CD8-positive, alpha-beta memory T cell (primary cell): ENCODE measurements at regions of chr1 and their contacts with region 1.

Region 1: GRCh38 chr1:222455188-222455879 is 92.6 kb downstream of the HHIPL2 start:
- DNase-seq: peak; percentile 62 to 83 (median 69)
- H3K4me3 ChIP-seq: no peak overlapping the region
- H3K4me3 Mint-ChIP-seq: peak overlapping the region in 5 of 7 donors; percentile 1 to 37 (median 8)
- H3K27ac ChIP-seq: no peak overlapping the region
- H3K27ac Mint-ChIP-seq: peak overlapping the region in 5 of 8 donors; percentile 0 to 65 (median 4)
- H3K4me1 ChIP-seq: peaks cover 9% of the 10 kb centered on the region
- H3K4me1 Mint-ChIP-seq: peaks cover 13 to 14% (median 14%) of the 10 kb centered on the region in 3 donors
- H3K27me3 ChIP-seq: no peaks in the 10 kb centered on the region
- H3K27me3 Mint-ChIP-seq: peaks cover under 1 to 3% of the 10 kb centered on the region in 2 donors

Region 2: GRCh38 chr1:221478050-221478949 is 977.0 kb before region 1 on chr1:
- CTCF ChIA-PET with region 1: interaction called, 13 read pairs
- POLR2A ChIA-PET with region 1: no interaction called
- DNase-seq: peak; percentile 14 to 72 (median 17)
- H3K4me3 ChIP-seq: no peak overlapping the region
- H3K4me3 Mint-ChIP-seq: no peak overlapping the region
- H3K27ac ChIP-seq: no peak overlapping the region
- H3K27ac Mint-ChIP-seq: peak overlapping the region in 2 of 8 donors; percentile 26 to 30
- H3K4me1 ChIP-seq: no peaks in the 10 kb centered on the region
- H3K4me1 Mint-ChIP-seq: peaks cover 0 to 3% (median 0%) of the 10 kb centered on the region in 3 donors
- H3K27me3 ChIP-seq: no peaks in the 10 kb centered on the region
- H3K27me3 Mint-ChIP-seq: peaks cover 4 to 14% of the 10 kb centered on the region in 2 donors

Region 3: GRCh38 chr1:221543529-221544120 is 911.7 kb before region 1 on chr1:
- CTCF ChIA-PET with region 1: no interaction called
- POLR2A ChIA-PET with region 1: interaction called, 10 read pairs
- DNase-seq: no peak
- H3K4me3 ChIP-seq: no peak overlapping the region
- H3K4me3 Mint-ChIP-seq: no peak overlapping the region
- H3K27ac ChIP-seq: no peak overlapping the region
- H3K27ac Mint-ChIP-seq: no peak overlapping the region
- H3K4me1 ChIP-seq: no peaks in the 10 kb centered on the region
- H3K4me1 Mint-ChIP-seq: no peaks in the 10 kb centered on the region
- H3K27me3 ChIP-seq: no peaks in the 10 kb centered on the region
- H3K27me3 Mint-ChIP-seq: peaks cover 3 to 31% of the 10 kb centered on the region in 2 donors

Region 4: GRCh38 chr1:222090103-222090502 is 365.2 kb before region 1 on chr1:
- CTCF ChIA-PET with region 1: interaction called, 42 read pairs
- POLR2A ChIA-PET with region 1: no interaction called
- DNase-seq: no peak
- H3K4me3 ChIP-seq: no peak overlapping the region
- H3K4me3 Mint-ChIP-seq: no peak overlapping the region
- H3K27ac ChIP-seq: no peak overlapping the region
- H3K27ac Mint-ChIP-seq: no peak overlapping the region
- H3K4me1 ChIP-seq: no peaks in the 10 kb centered on the region
- H3K4me1 Mint-ChIP-seq: no peaks in the 10 kb centered on the region
- H3K27me3 ChIP-seq: no peaks in the 10 kb centered on the region
- H3K27me3 Mint-ChIP-seq: peaks cover 10 to 14% of the 10 kb centered on the region in 2 donors

Region 5: GRCh38 chr1:222095606-222096475 is 359.5 kb before region 1 on chr1:
- CTCF ChIA-PET with region 1: interaction called, 42 read pairs
- POLR2A ChIA-PET with region 1: no interaction called
- DNase-seq: peak; percentile 34 to 67 (median 41)
- H3K4me3 ChIP-seq: no peak overlapping the region
- H3K4me3 Mint-ChIP-seq: no peak overlapping the region
- H3K27ac ChIP-seq: no peak overlapping the region
- H3K27ac Mint-ChIP-seq: no peak overlapping the region
- H3K4me1 ChIP-seq: no peaks in the 10 kb centered on the region
- H3K4me1 Mint-ChIP-seq: no peaks in the 10 kb centered on the region
- H3K27me3 ChIP-seq: no peaks in the 10 kb centered on the region
- H3K27me3 Mint-ChIP-seq: no peaks in the 10 kb centered on the region

Region 6: GRCh38 chr1:222441066-222441465 is 14.3 kb before region 1 on chr1:
- CTCF ChIA-PET with region 1: interaction called, 23 read pairs
- POLR2A ChIA-PET with region 1: no interaction called
- DNase-seq: no peak
- H3K4me3 ChIP-seq: no peak overlapping the region
- H3K4me3 Mint-ChIP-seq: no peak overlapping the region
- H3K27ac ChIP-seq: no peak overlapping the region
- H3K27ac Mint-ChIP-seq: peak overlapping the region in 1 of 8 donors; percentile 13
- H3K4me1 ChIP-seq: peaks cover 10% of the 10 kb centered on the region
- H3K4me1 Mint-ChIP-seq: peaks cover 7 to 25% (median 11%) of the 10 kb centered on the region in 3 donors
- H3K27me3 ChIP-seq: no peaks in the 10 kb centered on the region
- H3K27me3 Mint-ChIP-seq: peaks cover 8 to 14% of the 10 kb centered on the region in 2 donors

Region 7: GRCh38 chr1:222465211-222466041 is 10.1 kb after region 1 on chr1:
- CTCF ChIA-PET with region 1: interaction called, 42 read pairs
- POLR2A ChIA-PET with region 1: no interaction called
- DNase-seq: peak; percentile 59 to 81 (median 73)
- H3K4me3 ChIP-seq: peak overlapping the region; percentile 58
- H3K4me3 Mint-ChIP-seq: peak overlapping the region; percentile 81 to 91 (median 83)
- H3K27ac ChIP-seq: peak overlapping the region; percentile 60
- H3K27ac Mint-ChIP-seq: peak overlapping the region; percentile 69 to 94 (median 92)
- H3K4me1 ChIP-seq: peaks cover 8% of the 10 kb centered on the region
- H3K4me1 Mint-ChIP-seq: peaks cover 9 to 22% (median 15%) of the 10 kb centered on the region in 3 donors
- H3K27me3 ChIP-seq: no peaks in the 10 kb centered on the region
- H3K27me3 Mint-ChIP-seq: peaks cover 1 to 5% of the 10 kb centered on the region in 2 donors

Region 8: GRCh38 chr1:222546548-222547259 is 91.4 kb after region 1 on chr1:
- CTCF ChIA-PET with region 1: no interaction called
- POLR2A ChIA-PET with region 1: no interaction called
- DNase-seq: no peak
- H3K4me3 ChIP-seq: no peak overlapping the region
- H3K4me3 Mint-ChIP-seq: no peak overlapping the region
- H3K27ac ChIP-seq: no peak overlapping the region
- H3K27ac Mint-ChIP-seq: no peak overlapping the region
- H3K4me1 ChIP-seq: no peaks in the 10 kb centered on the region
- H3K4me1 Mint-ChIP-seq: no peaks in the 10 kb centered on the region
- H3K27me3 ChIP-seq: peaks cover 6% of the 10 kb centered on the region
- H3K27me3 Mint-ChIP-seq: peaks cover 10 to 31% of the 10 kb centered on the region in 2 donors